ENCODE measurements at regions of chr3 and their contacts with region 1.

Region 1: DNA sequence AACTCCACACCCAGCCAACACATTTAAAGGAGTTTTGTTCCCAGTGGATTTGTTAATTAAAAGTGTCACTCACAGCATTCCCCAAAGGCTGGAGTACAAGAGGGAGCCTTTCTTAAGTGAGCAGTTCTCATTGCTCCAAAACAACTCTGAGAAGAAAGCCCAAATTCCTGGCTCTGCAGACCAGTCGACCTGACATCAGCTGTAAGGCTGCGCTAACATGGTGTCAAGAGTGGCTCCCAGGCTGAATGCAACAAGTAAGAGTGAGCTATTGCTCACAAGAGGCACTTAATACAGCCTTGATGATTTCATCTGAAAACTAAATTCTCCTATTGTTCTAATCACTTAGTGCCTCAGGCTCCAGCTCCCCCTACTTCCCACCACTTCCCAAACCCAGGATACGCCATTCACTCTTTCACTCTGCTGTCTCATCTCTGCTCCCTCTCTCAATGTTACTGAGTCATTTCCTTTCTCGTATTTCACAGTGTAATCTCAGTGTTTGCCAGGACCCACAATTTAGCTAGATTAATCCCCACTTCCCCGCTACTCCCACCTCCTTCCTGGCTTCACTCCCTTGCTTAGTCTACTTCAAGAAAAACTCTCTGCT is 81.8 kb downstream of the WWTR1 start:
- DNase-seq: no peak
- H3K4me3 Mint-ChIP-seq: no peak overlapping the region
- H3K27ac Mint-ChIP-seq: peak overlapping the region; percentile 17
- H3K4me1 Mint-ChIP-seq: peaks cover 51% of the 10 kb centered on the region
- H3K27me3 Mint-ChIP-seq: no peaks in the 10 kb centered on the region

Region 2: DNA sequence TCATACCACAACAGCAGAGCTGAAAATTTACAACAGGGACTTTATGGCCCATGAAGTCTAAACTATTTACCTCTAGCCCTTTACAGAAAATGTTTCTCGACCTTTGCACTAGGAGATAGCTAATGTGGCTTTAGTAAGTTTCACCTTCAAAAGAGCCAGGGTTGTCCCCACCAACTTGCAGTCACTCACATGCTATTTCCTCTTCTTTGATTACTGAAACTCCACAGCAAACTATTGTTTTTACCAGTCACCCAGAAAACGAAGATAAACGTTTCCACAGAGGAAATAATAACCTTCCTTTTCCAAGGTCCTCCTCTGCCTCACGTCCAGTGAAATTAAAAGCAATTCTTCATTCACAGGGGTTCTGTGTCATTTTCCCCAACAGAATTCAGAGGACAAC is 33.5 kb after region 1 on chr3:
- intact Hi-C with region 1: loop called (anchors 2 kb)
- DNase-seq: no peak
- H3K4me3 Mint-ChIP-seq: no peak overlapping the region
- H3K27ac Mint-ChIP-seq: no peak overlapping the region
- H3K4me1 Mint-ChIP-seq: peaks cover 10% of the 10 kb centered on the region
- H3K27me3 Mint-ChIP-seq: peaks cover 2% of the 10 kb centered on the region

Region 3: DNA sequence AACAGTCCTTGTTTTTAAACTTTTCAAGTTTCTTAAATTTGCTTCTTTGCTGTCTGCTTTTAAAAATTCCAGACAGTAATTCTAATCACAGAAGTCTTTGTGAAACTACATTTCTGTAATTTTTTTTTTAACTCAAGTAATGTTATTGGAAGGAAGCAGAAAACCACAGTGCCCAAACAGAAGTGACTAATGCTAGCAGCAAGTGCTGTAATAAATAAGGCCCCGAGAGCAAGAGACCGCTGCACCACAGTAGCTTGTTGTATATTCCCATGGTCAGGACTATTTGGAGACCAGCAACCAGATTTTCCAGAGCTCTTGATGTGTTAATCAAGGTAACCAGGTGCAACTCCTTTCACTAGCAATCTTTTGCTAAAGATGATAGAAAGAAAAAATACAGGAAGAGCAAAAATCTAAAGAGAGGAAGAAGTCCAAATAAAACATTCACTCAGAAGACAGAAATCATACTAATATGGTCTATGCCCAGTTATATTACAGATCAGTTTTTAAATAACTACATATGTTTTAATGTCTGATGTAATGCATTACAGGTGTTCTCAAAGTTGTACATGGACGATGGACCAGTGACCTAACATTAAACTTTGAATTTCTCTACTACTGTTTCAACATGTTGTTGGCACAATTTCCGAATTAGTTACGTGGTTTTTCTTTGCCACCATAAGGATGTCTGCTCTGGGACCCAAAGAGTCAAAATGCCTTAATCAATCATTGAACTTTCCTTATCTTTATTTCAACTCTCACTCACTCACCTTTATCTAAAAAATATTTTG is 45.3 kb after region 1 on chr3:
- intact Hi-C with region 1: loop called (anchors 1 kb)
- DNase-seq: no peak
- H3K4me3 Mint-ChIP-seq: peak overlapping the region; percentile 39
- H3K27ac Mint-ChIP-seq: peak overlapping the region; percentile 77
- H3K4me1 Mint-ChIP-seq: peaks cover 34% of the 10 kb centered on the region
- H3K27me3 Mint-ChIP-seq: no peaks in the 10 kb centered on the region

Region 4: DNA sequence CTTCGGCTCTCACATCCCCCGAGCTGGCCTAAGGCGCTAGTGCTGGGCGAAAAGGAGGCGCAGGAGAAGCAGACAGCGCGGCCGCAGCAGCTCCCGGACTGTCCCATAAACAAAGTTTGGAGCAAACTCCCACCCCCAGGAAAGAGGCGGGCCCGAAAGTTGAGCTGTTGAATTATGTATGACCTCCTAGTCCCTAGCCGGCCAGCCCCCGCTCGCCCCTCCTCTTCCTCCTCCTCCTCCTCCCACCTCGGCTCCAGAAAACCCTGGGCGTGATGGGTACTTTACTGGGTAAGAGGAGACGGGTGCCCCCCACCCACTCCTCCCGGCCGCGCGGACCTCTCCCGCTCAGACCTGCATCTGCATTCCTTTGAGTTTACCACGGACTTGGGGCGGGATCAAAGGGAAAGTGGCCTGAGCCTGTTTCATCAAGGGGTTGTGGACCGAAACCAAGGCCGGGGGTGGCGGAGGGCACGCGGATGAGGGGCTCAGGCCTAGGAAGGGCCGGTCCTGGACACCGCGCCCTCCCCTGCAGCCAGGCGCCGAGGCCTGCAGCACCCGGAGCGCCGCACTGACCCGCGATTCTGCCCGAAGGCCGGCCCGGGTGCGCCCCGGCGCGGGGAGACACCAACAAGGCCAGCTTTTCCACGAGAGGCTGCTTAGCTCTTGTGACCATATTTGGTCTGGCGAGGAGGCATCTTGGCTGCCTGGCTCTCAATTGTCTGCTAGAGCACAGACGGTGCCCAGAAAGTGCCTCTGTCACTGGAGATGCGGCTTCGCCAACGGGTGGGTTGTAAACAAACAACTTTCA is 82.1 kb after region 1 on chr3 and contains the start of gene WWTR1:
- intact Hi-C with region 1: loop called (anchors 2 kb)
- DNase-seq: peak; percentile 26
- H3K4me3 Mint-ChIP-seq: peak within 1 kb of the TSS; percentile 90
- H3K27ac Mint-ChIP-seq: peak within 1 kb of the TSS; percentile 73
- H3K4me1 Mint-ChIP-seq: peaks cover 22% of the 10 kb centered on the region
- H3K27me3 Mint-ChIP-seq: peaks cover 39% of the 10 kb centered on the region
- total RNA-seq, gene WWTR1: 2.6 TPM in 2 replicates

Region 5: DNA sequence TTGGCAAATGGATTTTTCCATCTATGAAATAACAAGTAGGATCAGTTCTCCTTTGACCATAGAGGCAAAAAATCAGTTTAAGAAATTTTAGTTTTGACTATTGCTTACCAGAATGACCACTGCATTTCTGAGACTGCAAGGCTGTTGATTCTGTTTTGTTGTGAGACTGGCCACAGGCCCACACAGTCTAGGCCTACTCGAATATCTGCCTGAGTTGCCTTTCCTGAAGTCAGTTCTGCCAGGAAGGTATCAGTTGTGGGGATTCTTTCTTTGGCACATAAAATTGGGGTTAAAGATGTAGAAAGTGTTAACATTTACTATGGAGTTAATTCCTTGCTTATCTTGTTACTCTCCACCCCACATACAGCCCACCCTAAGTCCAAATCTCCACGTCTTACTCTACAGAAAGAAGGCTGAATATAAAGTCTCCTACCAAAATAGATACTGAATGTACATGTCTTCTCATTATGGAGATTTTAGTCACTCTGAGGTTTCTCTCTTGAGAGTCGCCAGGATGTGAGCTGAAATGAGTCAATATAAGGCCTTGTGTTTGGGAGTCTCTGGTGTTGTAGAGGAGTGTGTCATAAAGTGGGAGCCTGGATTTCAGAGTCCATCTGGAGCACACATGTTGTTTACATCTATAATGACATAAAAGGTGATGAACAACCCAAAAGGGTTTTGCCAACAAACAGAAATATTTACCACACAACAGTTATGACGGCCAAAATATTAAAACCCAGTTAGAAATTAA is 126.8 kb after region 1 on chr3:
- intact Hi-C with region 1: loop called (anchors 1 kb)
- DNase-seq: no peak
- H3K4me3 Mint-ChIP-seq: no peak overlapping the region
- H3K27ac Mint-ChIP-seq: peak overlapping the region; percentile 80
- H3K4me1 Mint-ChIP-seq: peaks cover 25% of the 10 kb centered on the region
- H3K27me3 Mint-ChIP-seq: no peaks in the 10 kb centered on the region

Region 6: DNA sequence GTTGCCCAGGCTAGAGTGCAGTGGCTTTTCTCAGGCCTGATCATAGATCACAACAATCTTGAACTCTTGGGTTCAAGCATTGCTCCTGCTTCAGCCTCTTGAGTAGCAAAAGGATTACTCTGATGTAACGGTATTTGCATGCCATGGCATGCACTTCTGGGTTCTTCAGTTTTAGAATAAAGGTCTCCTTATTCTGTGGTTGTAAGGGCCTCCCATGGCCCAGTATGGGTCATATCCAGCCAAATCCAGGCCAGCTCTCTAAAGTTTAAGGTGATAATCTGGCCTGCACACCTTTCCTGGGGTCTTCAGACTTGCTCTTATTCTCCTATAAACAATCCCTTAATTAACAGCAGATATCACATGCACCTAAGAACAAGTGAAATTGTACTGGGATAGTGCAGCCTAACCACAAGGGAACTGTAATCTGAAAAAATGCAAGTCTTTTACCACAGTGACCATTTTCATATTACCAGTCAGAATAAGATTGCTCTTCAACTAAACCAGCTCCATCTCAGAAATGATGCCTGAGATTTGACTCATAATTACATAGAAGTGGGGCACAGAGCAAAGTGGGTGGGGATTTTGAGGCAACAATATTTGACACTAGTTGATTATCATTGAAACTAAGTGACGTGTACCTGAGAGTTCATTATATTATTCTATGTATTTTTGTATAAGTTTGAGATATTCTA is 150.8 kb after region 1 on chr3:
- intact Hi-C with region 1: loop called (anchors 1 kb)
- DNase-seq: no peak
- H3K4me3 Mint-ChIP-seq: no peak overlapping the region
- H3K27ac Mint-ChIP-seq: no peak overlapping the region
- H3K4me1 Mint-ChIP-seq: peaks cover 9% of the 10 kb centered on the region
- H3K27me3 Mint-ChIP-seq: no peaks in the 10 kb centered on the region

Region 7: DNA sequence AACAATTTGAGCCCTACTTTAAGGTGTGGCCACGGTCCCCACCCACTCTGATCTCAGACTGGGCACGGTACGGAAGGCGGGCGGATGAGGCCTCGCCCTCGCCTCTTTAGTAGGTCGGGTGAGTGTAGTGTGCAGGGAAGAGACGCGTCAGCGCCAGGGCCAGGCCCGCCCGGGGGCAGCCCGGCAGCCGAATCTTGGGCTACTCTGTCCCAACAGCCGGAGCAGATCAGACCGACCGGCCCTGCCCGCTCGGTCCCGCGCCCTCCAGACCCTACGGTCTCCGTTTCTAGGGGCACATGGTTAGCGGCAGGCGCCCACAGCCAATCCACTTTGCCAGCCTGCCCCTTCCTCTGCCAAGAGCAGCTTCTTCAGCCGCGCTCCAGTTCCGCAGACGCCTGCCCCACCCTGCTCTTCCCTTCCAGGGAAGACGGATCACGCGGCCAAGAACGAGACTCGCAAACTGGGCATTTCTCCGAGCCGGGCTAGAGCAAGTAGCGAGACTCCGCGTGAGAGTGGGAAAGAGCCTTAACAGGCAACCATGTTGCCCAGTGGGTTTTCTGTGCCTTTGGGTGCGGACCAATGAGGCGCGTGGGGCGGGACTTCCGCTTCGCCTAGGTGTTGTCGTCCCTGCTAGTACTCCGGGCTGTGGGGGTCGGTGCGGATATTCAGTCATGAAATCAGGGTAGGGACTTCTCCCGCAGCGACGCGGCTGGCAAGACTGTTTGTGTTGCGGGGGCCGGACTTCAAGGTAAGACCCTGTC is 236.7 kb after region 1 on chr3 and contains the start of gene RNF13:
- intact Hi-C with region 1: loop called (anchors 2 kb)
- DNase-seq: peak; percentile 88
- H3K4me3 Mint-ChIP-seq: peak within 1 kb of the TSS; percentile 94
- H3K27ac Mint-ChIP-seq: peak within 1 kb of the TSS; percentile 99
- H3K4me1 Mint-ChIP-seq: peaks cover 50% of the 10 kb centered on the region
- H3K27me3 Mint-ChIP-seq: peaks cover 13% of the 10 kb centered on the region
- total RNA-seq, gene RNF13: 33.5 and 39.6 TPM in 2 replicates

Measured in activated T-helper 2 cell treated with anti-CD3 and anti-CD28 coated beads, Interferon-gamma antibody, Interleukin-2, Interleukin-4, amounts not matched to agents 10 μg/mL and 5 μg/mL and 100 μg/mL, durations not matched to agents 14 hours and 24 hours and 36 hours (primary cell).